H1 (cell line): ENCODE measurements at regions of chr12 and their contacts with region 1.

Region 1: DNA sequence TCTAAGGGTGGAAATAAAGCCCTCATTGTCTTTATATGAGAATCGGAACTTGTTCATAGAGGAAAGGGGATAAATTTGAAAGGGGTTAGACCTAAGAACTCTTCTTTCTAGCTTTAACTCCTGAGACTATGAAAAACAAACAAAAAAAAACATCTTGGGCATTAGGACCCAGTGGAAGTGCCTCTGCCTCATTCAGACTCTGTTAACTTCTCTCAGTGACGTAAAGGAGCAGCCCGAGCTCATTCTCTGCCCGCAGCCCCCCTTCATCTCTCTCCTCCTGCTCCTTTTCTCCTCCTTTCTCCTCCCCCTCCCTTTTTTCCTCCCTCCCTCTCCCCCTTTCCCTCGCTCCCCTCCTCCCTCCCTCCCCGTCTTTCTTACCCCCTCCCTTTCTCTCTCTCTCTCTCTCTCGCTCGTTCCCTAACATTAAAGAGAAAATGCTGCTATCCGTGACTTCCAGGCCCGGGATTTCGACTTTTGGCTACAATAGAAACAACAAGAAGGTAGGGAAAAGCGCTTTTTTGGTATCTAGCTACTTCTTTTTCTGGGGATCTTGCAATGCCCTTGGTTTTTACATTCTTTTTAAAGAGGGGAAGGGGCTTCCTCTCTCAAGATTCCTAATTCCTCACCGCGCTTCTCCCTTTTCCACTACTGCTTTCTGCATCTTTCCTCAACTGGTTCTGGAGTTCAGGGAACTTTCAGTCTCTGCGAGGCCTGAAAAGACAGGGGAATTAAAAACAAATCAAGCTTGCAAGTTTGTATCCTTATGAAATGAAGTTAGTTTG is at the start of gene RBMS2:
- DNase-seq: peak in 1 of 2 experiments; percentile 73
- H3K4me3 ChIP-seq: peak within 1 kb of the TSS; percentile 53 to 84 (median 65)
- H3K27ac ChIP-seq: no peak within 1 kb of the TSS
- H3K4me1 ChIP-seq: peaks cover under 1 to 2% (median 2%) of the 10 kb centered on the region in 4 experiments; a peak in 5 of 7 replicates
- H3K27me3 ChIP-seq: no peaks in the 10 kb centered on the region
- CTCF ChIP-seq: no peak
- EP300 ChIP-seq: no peak; a peak in 1 of 3 replicates
- POLR2A ChIP-seq: no peak
- RAD21 ChIP-seq: no peak
- total RNA-seq, gene RBMS2: 25.5 and 31.3 TPM in 2 replicates

Region 2: GRCh38 chr12:56574210-56574609 is 52.4 kb after region 1 on chr12:
- CTCF ChIA-PET with region 1: interaction called, 72 read pairs
- POLR2A ChIA-PET with region 1: interaction called, 5 read pairs
- DNase-seq: no peak
- H3K4me3 ChIP-seq: no peak overlapping the region
- H3K27ac ChIP-seq: no peak overlapping the region
- H3K4me1 ChIP-seq: no peaks in the 10 kb centered on the region
- H3K27me3 ChIP-seq: no peaks in the 10 kb centered on the region
- CTCF ChIP-seq: no peak
- EP300 ChIP-seq: no peak
- POLR2A ChIP-seq: no peak
- RAD21 ChIP-seq: no peak

Region 3: DNA sequence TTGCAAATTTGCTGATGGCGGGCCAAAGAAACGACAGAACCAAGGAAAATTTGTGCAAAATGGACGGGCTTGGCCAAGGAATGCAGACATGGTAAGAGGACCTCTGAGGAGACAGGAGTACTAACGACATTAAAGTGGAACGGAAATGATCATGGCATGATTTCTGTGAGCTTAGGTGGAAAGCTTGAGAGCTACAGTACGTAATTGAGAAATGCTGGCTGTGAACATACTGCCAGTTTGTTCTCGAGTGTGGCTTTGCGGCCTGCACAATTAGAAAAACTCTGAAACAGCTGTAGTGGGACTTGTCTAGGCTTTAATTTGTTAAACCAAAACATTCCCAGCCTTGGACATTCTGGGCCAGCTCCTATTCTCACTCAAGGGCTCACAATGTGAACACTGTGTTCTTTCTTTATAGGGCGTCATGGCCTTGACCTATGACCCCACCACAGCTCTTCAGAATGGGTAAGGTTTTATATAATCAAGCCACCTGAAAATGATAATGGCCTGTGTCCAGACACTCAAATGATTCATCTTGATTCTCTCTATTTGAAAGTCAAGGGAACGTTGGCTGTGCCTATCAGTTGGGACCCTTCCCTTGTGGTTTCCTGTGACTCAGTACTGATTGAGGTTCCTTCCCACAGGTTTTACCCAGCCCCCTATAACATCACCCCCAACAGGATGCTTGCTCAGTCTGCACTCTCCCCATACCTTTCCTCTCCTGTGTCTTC is 59.8 kb after region 1 on chr12:
- CTCF ChIA-PET with region 1: interaction called, 279 read pairs
- POLR2A ChIA-PET with region 1: no interaction called
- DNase-seq: no peak
- H3K4me3 ChIP-seq: no peak overlapping the region
- H3K27ac ChIP-seq: no peak overlapping the region
- H3K4me1 ChIP-seq: no peaks in the 10 kb centered on the region; a peak in 1 of 7 replicates
- H3K27me3 ChIP-seq: no peaks in the 10 kb centered on the region
- CTCF ChIP-seq: no peak
- EP300 ChIP-seq: no peak
- POLR2A ChIP-seq: no peak
- RAD21 ChIP-seq: no peak